Natural killer cell (primary cell): ENCODE measurements at regions of chr2 and their contacts with region 1.

Region 1: GRCh38 chr2:201451292-201452057 is at the starts of genes STRADB and TRAK2:
- DNase-seq: peak; percentile 92 to 97
- ATAC-seq: peak; percentile 93 to 98 (median 93)
- H3K4me3 ChIP-seq: peak within 1 kb of the TSS; percentile 65
- H3K4me3 Mint-ChIP-seq: peak within 1 kb of the TSS; percentile 98
- H3K27ac ChIP-seq: peak within 1 kb of the TSS; percentile 72
- H3K27ac Mint-ChIP-seq: peak within 1 kb of the TSS; percentile 95 to 99
- H3K4me1 ChIP-seq: peaks cover 10% of the 10 kb centered on the region
- H3K4me1 Mint-ChIP-seq: peaks cover 29 to 38% of the 10 kb centered on the region in 2 donors
- H3K27me3 ChIP-seq: no peaks in the 10 kb centered on the region
- H3K27me3 Mint-ChIP-seq: no peaks in the 10 kb centered on the region
- CTCF ChIP-seq: peak; percentile 18
- total RNA-seq, gene STRADB: 11.8 to 15.3 (median 14.7) TPM
- total RNA-seq, gene TRAK2: 19.2 to 29.4 (median 26.2) TPM

Region 2: GRCh38 chr2:201280191-201281040 is 171.1 kb before region 1 on chr2:
- intact Hi-C with region 1: no loop called
- DNase-seq: no peak
- ATAC-seq: no peak
- H3K4me3 ChIP-seq: no peak overlapping the region
- H3K4me3 Mint-ChIP-seq: no peak overlapping the region
- H3K27ac ChIP-seq: peak overlapping the region; percentile 35
- H3K27ac Mint-ChIP-seq: peak overlapping the region; percentile 83 to 100
- H3K4me1 ChIP-seq: no peaks in the 10 kb centered on the region
- H3K4me1 Mint-ChIP-seq: peaks cover 31 to 34% of the 10 kb centered on the region in 2 donors
- H3K27me3 ChIP-seq: no peaks in the 10 kb centered on the region
- H3K27me3 Mint-ChIP-seq: no peaks in the 10 kb centered on the region
- CTCF ChIP-seq: no peak

Region 3: DNA sequence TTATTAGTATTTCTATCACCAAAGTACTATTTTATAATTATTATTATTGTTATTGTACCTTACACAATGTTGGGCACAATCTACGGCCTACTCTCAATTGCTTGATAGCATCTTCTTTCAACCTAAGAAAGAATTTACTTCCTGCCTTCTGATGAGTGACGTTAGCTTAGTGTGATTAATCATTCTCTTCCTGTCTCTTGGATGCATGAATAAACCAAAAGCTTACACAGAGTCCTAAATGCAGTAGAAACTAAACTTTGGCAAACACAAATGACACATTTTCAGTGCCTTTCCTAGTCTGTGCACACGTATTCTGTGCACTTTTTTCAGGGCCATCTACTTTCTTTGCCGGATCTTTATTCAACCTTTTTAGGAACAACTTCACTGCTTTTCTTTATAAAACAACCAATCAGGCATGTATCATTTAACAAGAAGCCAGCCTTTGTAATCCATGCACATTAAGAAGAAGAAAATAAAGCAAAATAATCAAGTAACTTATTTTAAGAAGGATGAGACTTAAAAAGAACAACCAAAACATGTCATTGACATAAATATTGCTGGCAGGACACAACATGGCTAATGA is 19.3 kb before region 1 on chr2:
- intact Hi-C with region 1: no loop called
- DNase-seq: peak in 1 of 2 donors; percentile 57
- ATAC-seq: peak; percentile 61 to 96 (median 83)
- H3K4me3 ChIP-seq: no peak overlapping the region
- H3K4me3 Mint-ChIP-seq: peak overlapping the region; percentile 32
- H3K27ac ChIP-seq: peak overlapping the region; percentile 23
- H3K27ac Mint-ChIP-seq: peak overlapping the region; percentile 58 to 75
- H3K4me1 ChIP-seq: peaks cover 11% of the 10 kb centered on the region
- H3K4me1 Mint-ChIP-seq: peaks cover 28 to 41% of the 10 kb centered on the region in 2 donors
- H3K27me3 ChIP-seq: no peaks in the 10 kb centered on the region
- H3K27me3 Mint-ChIP-seq: no peaks in the 10 kb centered on the region
- CTCF ChIP-seq: no peak

Region 4: GRCh38 chr2:201546576-201546975 is 95.1 kb after region 1 on chr2:
- intact Hi-C with region 1: no loop called
- DNase-seq: no peak
- ATAC-seq: no peak
- H3K4me3 ChIP-seq: no peak overlapping the region
- H3K4me3 Mint-ChIP-seq: no peak overlapping the region
- H3K27ac ChIP-seq: no peak overlapping the region
- H3K27ac Mint-ChIP-seq: no peak overlapping the region
- H3K4me1 ChIP-seq: no peaks in the 10 kb centered on the region
- H3K4me1 Mint-ChIP-seq: no peaks in the 10 kb centered on the region
- H3K27me3 ChIP-seq: no peaks in the 10 kb centered on the region
- H3K27me3 Mint-ChIP-seq: peaks cover 5 to 9% of the 10 kb centered on the region in 2 donors
- CTCF ChIP-seq: no peak

Region 5: DNA sequence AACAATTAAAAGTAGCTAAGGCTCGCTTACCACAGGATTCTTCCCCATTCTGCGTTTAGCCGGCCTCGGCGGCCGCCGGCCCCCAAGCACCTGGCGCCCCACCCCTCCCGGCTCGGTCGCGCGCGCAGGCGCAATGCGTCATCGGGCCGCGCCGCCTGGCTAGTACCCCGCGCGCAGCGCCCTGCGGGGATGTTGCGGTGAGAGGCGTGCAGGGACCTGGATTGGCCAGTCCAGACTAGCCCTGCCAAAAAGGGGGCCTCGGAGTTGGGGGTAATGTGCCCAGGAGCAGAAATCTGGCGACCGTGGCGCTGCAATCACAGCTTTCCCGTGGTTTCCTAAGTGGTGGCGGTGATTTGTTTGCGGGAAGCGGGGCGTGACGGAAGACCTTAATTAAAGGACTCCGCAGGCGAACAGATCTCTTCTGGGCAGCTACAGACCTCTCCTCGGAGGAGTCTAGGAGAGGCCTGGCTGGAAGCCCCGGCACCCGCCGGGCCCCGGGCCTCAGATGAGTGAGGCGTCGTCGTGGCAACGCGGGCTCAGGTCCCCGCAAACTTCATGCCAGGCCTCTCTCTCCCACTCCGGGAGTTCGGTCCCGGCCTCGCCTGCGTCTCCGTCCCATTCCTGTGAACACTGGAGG is 191.2 kb after region 1 on chr2:
- intact Hi-C with region 1: loop called (anchors 1 kb)
- DNase-seq: peak; percentile 83 to 91
- ATAC-seq: peak; percentile 90 to 94 (median 91)
- H3K4me3 ChIP-seq: peak overlapping the region; percentile 78
- H3K4me3 Mint-ChIP-seq: peak overlapping the region; percentile 96
- H3K27ac ChIP-seq: peak overlapping the region; percentile 71
- H3K27ac Mint-ChIP-seq: peak overlapping the region; percentile 85 to 92
- H3K4me1 ChIP-seq: peaks cover 2% of the 10 kb centered on the region
- H3K4me1 Mint-ChIP-seq: peaks cover 15% of the 10 kb centered on the region in 2 donors
- H3K27me3 ChIP-seq: no peaks in the 10 kb centered on the region
- H3K27me3 Mint-ChIP-seq: peaks cover 0 to under 1% of the 10 kb centered on the region in 2 donors
- CTCF ChIP-seq: no peak

Region 6: GRCh38 chr2:201780674-201781581 is 329.5 kb after region 1 on chr2 and contains the start of gene ALS2:
- intact Hi-C with region 1: loop called (anchors 1 kb)
- DNase-seq: peak; percentile 93 to 96
- ATAC-seq: peak; percentile 90 to 95 (median 90)
- H3K4me3 ChIP-seq: peak within 1 kb of the TSS; percentile 87
- H3K4me3 Mint-ChIP-seq: peak within 1 kb of the TSS; percentile 99
- H3K27ac ChIP-seq: peak within 1 kb of the TSS; percentile 82
- H3K27ac Mint-ChIP-seq: peak within 1 kb of the TSS; percentile 91 to 94
- H3K4me1 ChIP-seq: peaks cover 14% of the 10 kb centered on the region
- H3K4me1 Mint-ChIP-seq: peaks cover 23 to 24% of the 10 kb centered on the region in 2 donors
- H3K27me3 ChIP-seq: no peaks in the 10 kb centered on the region
- H3K27me3 Mint-ChIP-seq: peaks cover 0 to 9% of the 10 kb centered on the region in 2 donors
- CTCF ChIP-seq: no peak
- total RNA-seq, gene ALS2: 15.0 to 28.6 (median 19.1) TPM